Naive thymus-derived CD8-positive, alpha-beta T cell (primary cell): ENCODE measurements at regions of chr5 and their contacts with region 1.

Region 1: GRCh38 chr5:95835682-95836385 is 13.3 kb upstream of the GLRX start:
- DNase-seq: peak in 3 of 10 donors; percentile 31 to 35 (median 32)
- ATAC-seq: peak; percentile 19 to 36
- H3K4me3 Mint-ChIP-seq: peak overlapping the region; percentile 86 to 96 (median 91)
- H3K27ac Mint-ChIP-seq: peak overlapping the region; percentile 87 to 98 (median 95)
- H3K4me1 Mint-ChIP-seq: peaks cover 33 to 67% (median 63%) of the 10 kb centered on the region in 4 donors
- H3K27me3 Mint-ChIP-seq: no peaks in the 10 kb centered on the region

Region 2: DNA sequence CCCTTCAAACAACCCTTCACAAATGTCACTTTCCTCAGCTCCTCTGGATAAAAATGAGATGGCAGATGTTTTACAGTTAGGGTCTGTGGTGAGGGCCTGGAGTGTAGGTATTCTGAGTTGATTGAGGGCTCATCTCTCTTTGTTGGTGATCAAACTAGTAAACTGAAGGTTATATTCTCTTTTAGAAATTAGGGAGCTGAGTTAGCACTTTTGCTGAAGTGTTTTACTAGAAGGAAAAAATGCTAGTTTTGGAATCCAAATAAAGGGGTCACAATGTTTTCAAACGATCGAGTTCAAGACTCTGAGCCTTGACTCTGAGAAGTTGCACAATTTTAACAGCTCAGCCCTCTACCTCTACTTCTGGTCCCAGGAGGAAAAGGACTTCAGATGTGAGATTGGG is 81.3 kb before region 1 on chr5:
- POLR2A ChIA-PET with region 1: no interaction called
- DNase-seq: no peak
- ATAC-seq: no peak
- H3K4me3 Mint-ChIP-seq: no peak overlapping the region
- H3K27ac Mint-ChIP-seq: no peak overlapping the region
- H3K4me1 Mint-ChIP-seq: peaks cover 0 to 12% (median under 1%) of the 10 kb centered on the region in 4 donors
- H3K27me3 Mint-ChIP-seq: no peaks in the 10 kb centered on the region

Region 3: DNA sequence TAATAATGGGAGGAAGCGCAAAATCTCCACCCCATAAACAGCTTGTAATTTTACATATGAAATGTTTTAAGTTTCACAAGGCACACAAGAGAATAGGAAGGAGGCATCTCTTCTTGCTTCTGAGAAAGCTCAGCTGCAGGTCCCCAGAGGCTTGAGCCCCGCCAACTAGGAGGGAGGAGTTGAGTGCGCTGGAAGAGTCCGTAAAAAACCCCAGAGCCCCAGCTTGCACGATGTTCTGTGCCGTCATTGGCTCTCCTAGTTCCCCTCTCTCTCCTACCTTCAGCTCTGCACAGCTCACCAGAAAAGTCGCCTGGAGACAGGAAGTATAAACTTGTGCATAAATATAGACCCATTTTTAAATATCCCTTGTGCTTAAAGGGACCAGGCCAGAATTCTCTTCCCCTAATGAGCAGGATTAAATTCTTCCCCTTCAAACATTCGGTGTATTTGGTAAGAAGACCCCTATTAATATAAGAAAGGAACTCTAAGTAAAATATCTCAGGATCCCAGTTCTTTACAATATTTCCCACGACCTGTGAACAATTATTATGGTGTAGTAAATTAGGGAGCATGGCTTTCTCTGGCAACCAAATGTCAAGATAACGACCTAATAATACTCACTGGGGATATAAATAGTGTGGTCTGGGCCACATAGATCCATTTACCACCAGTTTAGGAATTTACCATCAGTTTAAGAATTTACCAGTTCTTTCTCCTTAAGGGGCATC is 27.0 kb before region 1 on chr5:
- POLR2A ChIA-PET with region 1: interaction called, 30 read pairs
- DNase-seq: peak; percentile 63 to 93 (median 82)
- ATAC-seq: peak; percentile 98 to 99
- H3K4me3 Mint-ChIP-seq: peak overlapping the region; percentile 34 to 87 (median 76)
- H3K27ac Mint-ChIP-seq: peak overlapping the region; percentile 85 to 97 (median 93)
- H3K4me1 Mint-ChIP-seq: peaks cover 42 to 63% (median 62%) of the 10 kb centered on the region in 4 donors
- H3K27me3 Mint-ChIP-seq: no peaks in the 10 kb centered on the region

Region 4: DNA sequence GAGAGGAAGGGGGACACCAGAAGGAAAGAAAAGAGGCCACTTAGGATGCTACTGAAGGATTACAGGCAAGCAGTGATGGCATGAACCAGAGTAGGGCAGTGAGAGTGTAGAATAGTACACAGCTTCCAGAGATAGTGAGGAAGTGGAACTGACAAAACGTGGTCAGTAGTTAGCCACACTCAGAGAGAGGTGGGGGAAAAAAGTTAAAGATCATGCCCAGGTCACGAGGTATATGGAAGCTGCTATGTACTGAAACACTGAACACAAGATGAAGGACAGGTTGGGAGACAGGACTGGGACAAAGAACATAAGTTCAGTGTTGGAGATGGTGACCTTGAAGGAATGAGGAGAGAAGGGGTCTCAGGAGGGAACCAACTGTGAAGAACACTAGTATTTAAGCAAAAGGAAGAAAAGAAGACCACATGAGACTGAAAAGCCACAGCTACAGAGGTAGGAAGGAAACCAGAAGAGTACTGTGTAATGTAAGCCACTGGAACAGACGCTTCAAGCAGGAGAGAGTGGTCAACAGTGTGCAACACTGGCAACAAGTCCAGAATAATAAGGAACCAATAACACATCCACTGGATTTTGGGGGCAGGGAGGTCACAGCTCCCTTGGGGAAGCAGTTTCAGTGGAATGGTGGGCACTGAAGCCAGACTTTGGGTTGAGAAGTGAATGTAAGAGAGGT is 80.3 kb after region 1 on chr5:
- POLR2A ChIA-PET with region 1: no interaction called
- DNase-seq: no peak
- ATAC-seq: peak; percentile 23 to 57
- H3K4me3 Mint-ChIP-seq: peak overlapping the region in 2 of 10 donors; percentile 1 to 51
- H3K27ac Mint-ChIP-seq: peak overlapping the region in 5 of 10 donors; percentile 0 to 58 (median 49)
- H3K4me1 Mint-ChIP-seq: peaks cover 12 to 19% (median 15%) of the 10 kb centered on the region in 4 donors
- H3K27me3 Mint-ChIP-seq: no peaks in the 10 kb centered on the region

Region 5: DNA sequence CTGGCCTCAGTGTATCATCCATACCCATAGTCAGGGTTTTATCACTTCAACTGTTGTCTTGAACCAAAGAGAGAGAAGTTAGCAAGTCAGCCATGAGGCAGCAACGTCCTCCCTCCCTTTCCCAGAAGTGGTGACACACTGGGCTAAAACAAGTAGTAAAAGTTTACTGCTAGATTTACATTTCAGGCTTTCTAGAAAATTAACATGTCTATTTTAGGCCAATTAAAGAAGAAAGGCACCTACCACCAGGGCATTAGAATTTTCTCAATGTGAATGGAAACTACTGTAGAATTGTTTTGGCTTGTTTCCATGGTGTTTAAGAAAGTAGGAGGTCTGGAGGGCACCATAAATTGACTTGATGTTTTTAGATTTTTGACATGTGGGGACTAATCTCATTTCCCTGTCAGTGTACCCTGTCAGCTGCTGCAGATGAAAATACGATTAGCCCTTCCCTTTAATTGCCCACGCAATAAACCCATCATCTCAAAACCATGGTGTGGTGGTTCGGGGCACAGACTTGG is 247.6 kb after region 1 on chr5:
- POLR2A ChIA-PET with region 1: no interaction called
- DNase-seq: no peak
- ATAC-seq: no peak
- H3K4me3 Mint-ChIP-seq: no peak overlapping the region
- H3K27ac Mint-ChIP-seq: no peak overlapping the region
- H3K4me1 Mint-ChIP-seq: no peaks in the 10 kb centered on the region
- H3K27me3 Mint-ChIP-seq: peaks cover 5 to 45% (median 13%) of the 10 kb centered on the region in 5 donors

Region 6: GRCh38 chr5:96662725-96663513 is 827.1 kb after region 1 on chr5:
- POLR2A ChIA-PET with region 1: interaction called, 10 read pairs
- DNase-seq: peak; percentile 73 to 88 (median 86)
- ATAC-seq: peak; percentile 72 to 76
- H3K4me3 Mint-ChIP-seq: peak overlapping the region; percentile 94 to 99 (median 96)
- H3K27ac Mint-ChIP-seq: peak overlapping the region; percentile 89 to 99 (median 96)
- H3K4me1 Mint-ChIP-seq: peaks cover 17 to 66% (median 35%) of the 10 kb centered on the region in 4 donors
- H3K27me3 Mint-ChIP-seq: no peaks in the 10 kb centered on the region